HepG2 (cell line): ENCODE measurements at regions of chr18 and their contacts with region 1.

Region 1: DNA sequence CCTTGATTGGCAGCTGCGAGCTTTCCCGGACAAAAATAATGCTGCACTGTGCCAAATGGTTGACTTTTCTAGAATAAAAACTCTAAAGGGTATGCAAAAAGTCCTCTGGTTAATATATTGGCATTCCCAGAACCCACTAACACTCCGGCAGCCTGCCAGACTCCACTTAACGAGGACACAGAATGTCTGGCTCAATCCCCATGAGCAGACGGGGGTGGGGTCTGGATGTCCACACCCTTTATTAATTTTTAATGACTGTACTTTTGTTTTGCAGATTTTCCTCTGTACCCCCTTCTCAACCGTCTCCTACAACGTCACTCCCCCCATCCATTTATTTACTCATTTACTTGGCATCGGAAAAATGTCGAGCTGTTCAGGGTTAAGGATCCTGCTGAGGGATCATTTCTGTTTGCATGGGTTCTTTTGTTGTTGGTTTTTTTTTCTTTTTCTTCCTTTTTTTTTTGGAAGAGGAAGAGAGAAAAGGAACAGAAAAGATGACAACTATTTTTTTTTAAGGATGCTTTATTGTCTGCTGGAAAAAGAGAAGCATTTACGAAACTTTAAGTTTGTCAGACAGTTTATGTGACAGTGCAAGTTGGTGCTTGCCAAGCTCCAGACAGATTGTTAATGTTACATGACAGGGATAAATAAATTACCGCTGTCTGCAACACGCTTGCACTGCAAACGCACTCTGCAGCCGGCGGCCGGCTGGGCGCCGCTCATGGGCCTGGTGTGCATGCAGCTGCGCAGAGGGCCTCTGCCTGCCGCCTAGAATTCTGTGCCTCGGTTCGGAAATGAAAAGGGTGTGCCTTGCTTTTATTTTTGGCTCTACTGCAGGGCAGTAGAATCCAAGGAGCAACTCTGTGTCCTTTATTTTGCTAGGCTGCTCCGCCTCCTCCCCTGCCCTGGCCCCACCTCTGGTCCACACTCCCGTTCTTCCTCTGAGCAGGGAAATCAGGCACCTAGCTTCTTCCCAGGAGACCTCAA is 3.6 kb downstream of the LDLRAD4 start:
- DNase-seq: no peak
- ATAC-seq: no peak
- H3K4me3 ChIP-seq: no peak overlapping the region
- H3K27ac ChIP-seq: no peak overlapping the region
- H3K4me1 ChIP-seq: peaks cover 52% of the 10 kb centered on the region
- H3K27me3 ChIP-seq: no peaks in the 10 kb centered on the region
- CTCF ChIP-seq: no peak
- EP300 ChIP-seq: no peak
- POLR2A ChIP-seq: no peak
- RAD21 ChIP-seq: no peak

Region 2: DNA sequence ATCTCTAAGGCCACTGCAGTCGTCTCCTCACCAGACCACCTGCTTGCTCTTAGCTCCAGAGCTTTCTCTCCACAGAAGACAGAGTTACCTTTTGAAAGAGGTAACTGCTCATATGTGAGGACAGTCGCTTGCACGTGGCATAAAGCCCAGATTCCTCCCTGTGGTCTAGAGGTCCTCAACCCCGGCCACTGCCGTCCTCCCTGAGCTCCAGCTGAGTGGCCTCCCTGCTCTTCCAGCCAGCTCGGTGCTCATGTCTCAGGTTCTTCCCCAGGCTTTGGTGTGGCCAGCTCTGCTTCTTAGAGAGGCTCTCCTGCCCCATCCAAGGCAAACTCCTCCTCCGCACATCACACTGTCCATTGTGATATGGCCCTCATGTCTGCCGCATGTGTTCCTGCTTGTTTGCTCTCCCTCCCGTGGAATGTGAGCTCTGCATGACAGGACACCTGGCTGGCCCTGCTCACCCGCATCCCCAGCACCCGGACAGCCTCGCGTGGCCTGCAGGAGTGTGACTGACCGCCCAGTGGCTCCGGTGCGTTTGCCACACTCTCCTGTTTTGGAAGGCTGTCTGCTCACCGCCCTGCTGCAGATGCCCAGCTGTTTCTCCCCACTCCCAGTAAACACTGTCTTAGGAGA is 95.1 kb before region 1 on chr18:
- CTCF ChIA-PET with region 1: no interaction called
- POLR2A ChIA-PET with region 1: no interaction called
- in situ Hi-C with region 1: no loop called
- intact Hi-C with region 1: no loop called
- DNase-seq: no peak
- ATAC-seq: no peak
- H3K4me3 ChIP-seq: no peak overlapping the region
- H3K27ac ChIP-seq: no peak overlapping the region
- H3K4me1 ChIP-seq: no peaks in the 10 kb centered on the region
- H3K27me3 ChIP-seq: no peaks in the 10 kb centered on the region
- CTCF ChIP-seq: no peak
- EP300 ChIP-seq: no peak
- POLR2A ChIP-seq: no peak
- RAD21 ChIP-seq: no peak

Region 3: GRCh38 chr18:13185675-13186198 is 36.4 kb before region 1 on chr18:
- CTCF ChIA-PET with region 1: no interaction called
- POLR2A ChIA-PET with region 1: no interaction called
- in situ Hi-C with region 1: no loop called
- intact Hi-C with region 1: no loop called
- DNase-seq: no peak
- ATAC-seq: peak; percentile 69
- H3K4me3 ChIP-seq: peak overlapping the region in 1 of 3 experiments; percentile 8; a peak in 1 of 6 replicates
- H3K27ac ChIP-seq: no peak overlapping the region
- H3K4me1 ChIP-seq: peaks cover 53% of the 10 kb centered on the region
- H3K27me3 ChIP-seq: no peaks in the 10 kb centered on the region
- CTCF ChIP-seq: no peak
- EP300 ChIP-seq: no peak
- POLR2A ChIP-seq: no peak
- RAD21 ChIP-seq: no peak

Region 4: DNA sequence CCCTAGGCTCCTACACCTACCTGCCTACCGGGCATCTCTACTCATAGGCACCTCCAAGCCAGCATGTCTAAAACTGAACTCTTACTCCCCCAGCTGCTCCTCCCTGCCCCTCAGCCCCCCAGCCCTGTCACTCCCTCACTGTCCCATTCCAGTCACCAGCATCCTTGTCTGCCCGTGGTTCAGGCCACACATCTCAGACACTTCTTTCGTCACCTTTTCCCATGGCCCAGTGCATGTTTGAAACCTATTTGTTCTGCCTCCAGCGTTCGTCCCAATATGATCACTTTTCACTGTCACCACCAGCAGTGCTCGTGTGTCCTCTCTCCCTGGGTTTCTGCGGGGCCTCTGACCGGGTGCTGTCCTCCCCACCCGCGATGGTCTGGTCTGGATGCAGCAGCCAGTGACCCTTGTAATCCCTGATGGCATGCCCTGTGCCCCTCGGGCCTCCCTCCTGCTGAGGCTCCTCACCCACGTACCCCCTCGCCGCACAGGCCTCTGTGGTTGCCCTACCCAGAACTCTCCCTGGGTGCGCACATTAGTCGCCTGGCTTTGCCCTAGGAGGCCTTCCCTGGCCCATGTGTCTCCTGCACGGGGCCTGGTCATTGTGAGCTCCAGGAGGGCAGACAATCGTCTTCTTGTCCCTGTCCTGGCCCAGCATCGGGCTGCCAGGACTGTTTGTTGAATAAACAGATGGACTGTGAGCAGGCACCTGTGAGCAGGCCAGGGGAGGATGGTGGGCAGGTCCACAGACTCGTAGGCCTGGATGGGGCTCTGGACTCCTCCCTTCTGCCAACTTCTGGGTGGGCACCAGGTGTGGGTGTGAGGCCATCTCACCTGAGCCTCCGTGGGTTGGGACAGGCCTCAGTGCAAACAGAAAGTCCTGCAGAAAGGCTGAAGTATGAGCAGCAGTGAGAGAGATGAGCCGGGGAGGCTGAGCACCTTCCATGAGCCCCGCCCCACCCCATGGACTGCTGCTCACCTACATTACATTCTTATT is 11.9 kb after region 1 on chr18:
- CTCF ChIA-PET with region 1: no interaction called
- POLR2A ChIA-PET with region 1: no interaction called
- in situ Hi-C with region 1: no loop called
- intact Hi-C with region 1: loop called (anchors 1 kb)
- DNase-seq: no peak
- ATAC-seq: peak; percentile 90
- H3K4me3 ChIP-seq: peak overlapping the region; percentile 28 to 59 (median 35); a peak in 5 of 6 replicates
- H3K27ac ChIP-seq: peak overlapping the region; percentile 30
- H3K4me1 ChIP-seq: peaks cover 25% of the 10 kb centered on the region
- H3K27me3 ChIP-seq: no peaks in the 10 kb centered on the region
- CTCF ChIP-seq: peak; percentile 26
- EP300 ChIP-seq: no peak
- POLR2A ChIP-seq: no peak
- RAD21 ChIP-seq: no peak

Region 5: DNA sequence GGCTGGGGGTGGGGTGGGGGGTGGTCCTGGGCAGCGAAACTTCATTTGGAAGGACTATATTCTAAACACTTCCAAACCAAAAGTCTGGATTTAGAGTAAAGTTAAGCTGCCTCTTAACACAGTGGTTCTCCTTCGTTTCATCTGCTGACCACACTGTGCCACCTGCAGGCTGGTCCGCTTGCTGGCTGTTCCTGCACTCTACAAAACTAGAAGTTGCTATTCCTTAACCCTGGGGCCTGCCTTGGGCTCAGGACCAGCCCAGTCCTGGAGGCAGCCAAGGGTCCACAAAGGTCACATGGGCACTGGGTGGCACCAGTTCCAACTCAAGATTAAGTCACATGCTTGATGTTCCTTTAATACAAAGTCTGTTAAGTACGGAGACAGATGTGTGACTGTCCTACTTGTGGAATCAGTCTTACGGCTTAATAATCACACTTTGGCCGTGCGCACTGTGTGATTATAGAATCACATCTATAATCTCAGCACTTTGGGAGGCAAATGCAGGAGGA is 308.8 kb after region 1 on chr18:
- CTCF ChIA-PET with region 1: interaction called, 7 read pairs
- POLR2A ChIA-PET with region 1: no interaction called
- in situ Hi-C with region 1: loop called (anchors 10 kb)
- intact Hi-C with region 1: loop called (anchors 2 kb)
- DNase-seq: no peak
- ATAC-seq: peak; percentile 93
- H3K4me3 ChIP-seq: no peak overlapping the region
- H3K27ac ChIP-seq: no peak overlapping the region
- H3K4me1 ChIP-seq: peaks cover 32% of the 10 kb centered on the region
- H3K27me3 ChIP-seq: no peaks in the 10 kb centered on the region
- CTCF ChIP-seq: peak; percentile 70
- EP300 ChIP-seq: no peak
- POLR2A ChIP-seq: no peak
- RAD21 ChIP-seq: peak; percentile 56; the same call in 1 of the 2 replicates